Endothelial cell of umbilical vein (primary cell): ENCODE measurements at regions of chr1 and their contacts with region 1.

Region 1: DNA sequence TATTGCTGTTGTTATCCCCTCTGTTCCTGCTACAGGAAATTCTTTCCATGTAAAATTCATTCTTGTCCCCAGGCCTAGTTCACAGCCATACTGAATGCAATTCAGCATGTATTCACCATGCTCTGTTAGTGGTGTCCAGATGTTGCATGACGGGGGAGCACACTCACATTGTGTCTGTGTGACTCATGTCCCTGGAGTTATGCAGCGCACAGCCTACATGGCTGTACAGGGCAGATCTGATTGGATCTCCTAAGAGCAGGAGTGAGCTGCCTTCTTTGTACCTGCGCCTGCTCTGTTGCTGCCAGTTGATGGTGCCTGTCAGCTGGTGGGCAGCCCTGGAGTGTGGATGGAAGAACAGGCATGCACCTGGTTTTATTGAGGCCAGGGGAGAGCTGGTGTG is 17.6 kb downstream of the HTR6 start:
- DNase-seq: no peak
- H3K4me3 ChIP-seq: no peak overlapping the region
- H3K27ac ChIP-seq: no peak overlapping the region
- H3K4me1 ChIP-seq: no peaks in the 10 kb centered on the region
- H3K27me3 ChIP-seq: no peaks in the 10 kb centered on the region
- CTCF ChIP-seq: no peak
- POLR2A ChIP-seq: no peak

Region 2: DNA sequence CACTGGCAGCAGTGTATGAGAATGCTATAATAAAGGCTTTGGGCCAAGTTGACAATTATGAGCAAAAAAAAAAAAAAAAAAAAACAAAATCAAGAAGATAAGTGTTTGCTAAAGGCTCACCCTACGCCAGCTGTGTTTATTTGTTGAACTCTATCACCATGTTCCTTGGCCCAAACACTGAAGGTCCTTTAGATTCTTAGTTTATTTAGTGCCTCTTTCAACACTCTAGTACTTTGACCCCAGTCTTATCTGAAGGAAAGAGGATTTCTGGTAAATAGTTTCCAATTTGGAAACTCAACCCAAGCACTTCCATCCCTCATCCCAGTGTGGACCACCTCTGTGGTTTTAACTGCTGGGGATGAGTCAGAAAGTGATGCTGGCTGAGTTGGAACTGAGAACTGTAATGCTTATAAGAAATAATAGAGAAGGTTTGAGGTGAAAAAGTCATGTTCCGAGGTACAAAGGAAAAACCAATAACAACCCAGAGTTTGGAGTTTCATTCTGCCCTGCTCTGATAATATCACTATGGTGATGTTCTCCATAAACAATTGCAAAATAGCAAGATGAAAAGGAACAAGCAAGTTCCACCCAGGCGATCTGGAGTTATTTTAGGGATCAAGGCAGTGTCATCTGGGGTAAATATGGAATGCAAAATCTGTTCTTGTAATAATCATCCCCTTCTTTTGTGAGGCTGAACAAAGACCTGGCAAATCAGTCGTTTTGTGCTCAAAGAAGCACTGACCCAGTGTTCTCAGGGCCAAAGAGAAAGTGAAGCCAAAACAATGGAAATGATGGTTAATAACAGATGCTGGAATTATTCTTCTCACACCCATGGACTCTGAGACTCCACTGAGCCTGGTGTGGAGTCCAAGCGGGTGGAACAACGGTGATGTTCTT is 177.2 kb before region 1 on chr1:
- CTCF ChIA-PET with region 1: no interaction called
- POLR2A ChIA-PET with region 1: no interaction called
- dilution Hi-C with region 1: no loop called
- intact Hi-C with region 1: no loop called
- DNase-seq: peak; percentile 86
- H3K4me3 ChIP-seq: no peak overlapping the region
- H3K27ac ChIP-seq: peak overlapping the region; percentile 61
- H3K4me1 ChIP-seq: peaks cover 26% of the 10 kb centered on the region
- H3K27me3 ChIP-seq: no peaks in the 10 kb centered on the region
- CTCF ChIP-seq: no peak
- POLR2A ChIP-seq: peak; percentile 33

Region 3: DNA sequence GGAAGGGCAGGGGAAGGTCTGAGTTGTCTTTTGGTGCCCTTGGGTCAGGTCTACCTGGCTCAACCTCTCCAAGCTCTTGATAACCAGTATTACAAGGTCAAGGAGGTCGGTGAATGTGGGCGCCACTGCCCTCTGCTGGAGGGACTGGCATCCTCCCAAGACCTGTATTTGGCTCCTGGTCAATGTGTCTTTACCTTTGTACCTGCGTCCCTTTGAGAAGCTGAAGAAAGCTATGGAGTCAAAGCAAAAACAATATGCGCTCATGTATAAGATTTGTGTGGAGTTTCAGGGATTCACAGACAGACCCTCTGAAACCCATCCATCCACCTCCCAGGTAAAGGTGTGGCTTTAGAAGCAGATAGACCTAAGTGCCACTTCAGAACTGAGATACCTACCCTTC is 100.0 kb before region 1 on chr1:
- CTCF ChIA-PET with region 1: no interaction called
- POLR2A ChIA-PET with region 1: interaction called, 13 read pairs
- dilution Hi-C with region 1: no loop called
- intact Hi-C with region 1: no loop called
- DNase-seq: peak; percentile 44
- H3K4me3 ChIP-seq: no peak overlapping the region
- H3K27ac ChIP-seq: no peak overlapping the region
- H3K4me1 ChIP-seq: no peaks in the 10 kb centered on the region
- H3K27me3 ChIP-seq: peaks cover 2 to 5% of the 10 kb centered on the region in 2 experiments
- CTCF ChIP-seq: peak; percentile 65 to 72
- POLR2A ChIP-seq: no peak

Region 4: DNA sequence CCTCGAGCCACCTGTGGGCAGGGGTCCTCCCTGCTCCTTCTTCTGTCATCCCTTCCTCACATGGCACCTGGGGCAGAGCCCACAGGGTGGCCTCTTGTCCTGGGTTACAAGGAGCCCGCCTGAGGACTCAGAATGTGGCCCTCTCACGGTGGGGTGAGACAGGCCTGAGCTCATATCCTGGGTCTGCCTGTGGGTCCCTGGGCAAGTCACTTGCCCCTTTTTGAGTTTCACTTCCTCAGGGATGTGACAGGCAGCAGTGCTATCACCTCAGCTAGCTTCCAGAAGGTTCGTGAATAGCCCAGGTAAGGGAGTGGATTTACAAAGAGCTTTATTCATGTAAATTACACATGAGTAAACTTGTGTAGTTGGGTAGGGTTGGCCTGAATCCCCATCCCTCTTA is 15.9 kb after region 1 on chr1:
- CTCF ChIA-PET with region 1: no interaction called
- POLR2A ChIA-PET with region 1: no interaction called
- dilution Hi-C with region 1: no loop called
- intact Hi-C with region 1: no loop called
- DNase-seq: no peak
- H3K4me3 ChIP-seq: no peak overlapping the region
- H3K27ac ChIP-seq: no peak overlapping the region
- H3K4me1 ChIP-seq: no peaks in the 10 kb centered on the region
- H3K27me3 ChIP-seq: no peaks in the 10 kb centered on the region
- CTCF ChIP-seq: no peak
- POLR2A ChIP-seq: no peak

Region 5: GRCh38 chr1:19758227-19758830 is 76.1 kb after region 1 on chr1:
- CTCF ChIA-PET with region 1: no interaction called
- POLR2A ChIA-PET with region 1: no interaction called
- dilution Hi-C with region 1: no loop called
- intact Hi-C with region 1: no loop called
- DNase-seq: no peak
- H3K4me3 ChIP-seq: no peak overlapping the region
- H3K27ac ChIP-seq: no peak overlapping the region
- H3K4me1 ChIP-seq: no peaks in the 10 kb centered on the region
- H3K27me3 ChIP-seq: no peaks in the 10 kb centered on the region
- CTCF ChIP-seq: no peak
- POLR2A ChIP-seq: no peak

Region 6: GRCh38 chr1:19909392-19909791 is 227.1 kb after region 1 on chr1:
- CTCF ChIA-PET with region 1: no interaction called
- POLR2A ChIA-PET with region 1: no interaction called
- dilution Hi-C with region 1: no loop called
- intact Hi-C with region 1: no loop called
- DNase-seq: no peak
- H3K4me3 ChIP-seq: no peak overlapping the region
- H3K27ac ChIP-seq: no peak overlapping the region
- H3K4me1 ChIP-seq: no peaks in the 10 kb centered on the region
- H3K27me3 ChIP-seq: no peaks in the 10 kb centered on the region
- CTCF ChIP-seq: no peak
- POLR2A ChIP-seq: no peak